A673 (cell line): ENCODE measurements at regions of chr18 and their contacts with region 1.

Region 1: GRCh38 chr18:36450264-36450663 is 152.8 kb downstream of the FHOD3 start:
- DNase-seq: no peak
- H3K4me3 ChIP-seq: no peak overlapping the region
- H3K27ac ChIP-seq: no peak overlapping the region
- H3K4me1 ChIP-seq: no peaks in the 10 kb centered on the region
- H3K27me3 ChIP-seq: peaks cover 22% of the 10 kb centered on the region
- CTCF ChIP-seq: no peak

Region 2: GRCh38 chr18:36717422-36718110 is 267.3 kb after region 1 on chr18:
- CTCF ChIA-PET with region 1: no interaction called
- POLR2A ChIA-PET with region 1: interaction called, 10 read pairs
- intact Hi-C with region 1: no loop called
- DNase-seq: no peak
- H3K4me3 ChIP-seq: no peak overlapping the region
- H3K27ac ChIP-seq: no peak overlapping the region
- H3K4me1 ChIP-seq: no peaks in the 10 kb centered on the region
- H3K27me3 ChIP-seq: peaks cover 10% of the 10 kb centered on the region
- CTCF ChIP-seq: no peak

Region 3: GRCh38 chr18:37033419-37033818 is 583.2 kb after region 1 on chr18:
- CTCF ChIA-PET with region 1: no interaction called
- POLR2A ChIA-PET with region 1: no interaction called
- intact Hi-C with region 1: no loop called
- DNase-seq: no peak
- H3K4me3 ChIP-seq: no peak overlapping the region
- H3K27ac ChIP-seq: no peak overlapping the region
- H3K4me1 ChIP-seq: no peaks in the 10 kb centered on the region
- H3K27me3 ChIP-seq: no peaks in the 10 kb centered on the region
- CTCF ChIP-seq: no peak